Aorta (tissue), 5 donors: ENCODE measurements at regions of chr11 and their contacts with region 1.

Region 1: DNA sequence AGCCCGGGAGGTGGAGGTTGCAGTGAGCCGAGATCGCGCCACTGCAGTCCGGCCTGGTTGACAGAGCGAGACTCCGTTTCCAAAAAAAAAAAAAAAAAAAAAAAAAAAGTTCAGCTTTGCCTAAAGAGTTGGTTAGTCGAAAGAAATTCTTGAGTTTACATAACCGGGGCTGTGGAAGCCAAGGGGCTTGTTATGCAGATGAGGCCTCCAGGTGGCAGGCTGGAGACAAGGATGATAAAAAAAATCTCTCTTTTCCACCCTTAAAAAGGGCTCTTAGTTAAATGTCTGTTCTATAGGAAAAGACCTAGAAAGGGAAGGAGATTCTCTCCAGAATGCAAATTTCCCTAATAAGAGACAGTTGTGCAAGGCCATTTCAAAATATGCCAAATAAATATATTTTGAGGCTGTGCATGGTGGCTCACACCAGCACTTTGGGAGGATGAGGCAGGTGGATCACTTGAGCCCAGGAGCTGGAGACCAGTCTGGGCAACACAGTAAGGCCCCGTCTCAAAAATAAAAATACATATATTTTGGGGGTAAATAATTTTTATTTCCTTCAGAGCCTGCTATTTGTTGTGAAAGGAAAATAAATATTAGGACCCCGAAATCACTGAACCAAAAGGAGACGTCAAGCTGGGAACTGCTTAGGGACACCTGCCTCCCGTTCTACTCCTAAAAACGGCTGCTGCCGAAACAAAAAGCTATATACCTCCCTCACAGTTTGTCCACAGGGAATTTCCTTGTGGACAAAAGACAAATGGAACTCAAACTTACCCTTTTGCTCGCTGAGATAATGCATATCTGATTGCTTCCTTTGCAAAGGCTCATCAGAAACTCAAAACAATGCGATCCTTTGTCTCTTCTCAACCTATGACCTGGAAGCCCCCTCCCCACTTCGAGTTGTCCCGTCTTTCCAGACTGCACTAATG is 2.4 kb upstream of the IFITM2 start:
- DNase-seq: peak in 1 of 2 donors; percentile 73
- ATAC-seq: no peak
- H3K4me3 ChIP-seq: no peak overlapping the region
- H3K27ac ChIP-seq: no peak overlapping the region
- H3K4me1 ChIP-seq: no peaks in the 10 kb centered on the region
- H3K27me3 ChIP-seq: no peaks in the 10 kb centered on the region

Region 2: DNA sequence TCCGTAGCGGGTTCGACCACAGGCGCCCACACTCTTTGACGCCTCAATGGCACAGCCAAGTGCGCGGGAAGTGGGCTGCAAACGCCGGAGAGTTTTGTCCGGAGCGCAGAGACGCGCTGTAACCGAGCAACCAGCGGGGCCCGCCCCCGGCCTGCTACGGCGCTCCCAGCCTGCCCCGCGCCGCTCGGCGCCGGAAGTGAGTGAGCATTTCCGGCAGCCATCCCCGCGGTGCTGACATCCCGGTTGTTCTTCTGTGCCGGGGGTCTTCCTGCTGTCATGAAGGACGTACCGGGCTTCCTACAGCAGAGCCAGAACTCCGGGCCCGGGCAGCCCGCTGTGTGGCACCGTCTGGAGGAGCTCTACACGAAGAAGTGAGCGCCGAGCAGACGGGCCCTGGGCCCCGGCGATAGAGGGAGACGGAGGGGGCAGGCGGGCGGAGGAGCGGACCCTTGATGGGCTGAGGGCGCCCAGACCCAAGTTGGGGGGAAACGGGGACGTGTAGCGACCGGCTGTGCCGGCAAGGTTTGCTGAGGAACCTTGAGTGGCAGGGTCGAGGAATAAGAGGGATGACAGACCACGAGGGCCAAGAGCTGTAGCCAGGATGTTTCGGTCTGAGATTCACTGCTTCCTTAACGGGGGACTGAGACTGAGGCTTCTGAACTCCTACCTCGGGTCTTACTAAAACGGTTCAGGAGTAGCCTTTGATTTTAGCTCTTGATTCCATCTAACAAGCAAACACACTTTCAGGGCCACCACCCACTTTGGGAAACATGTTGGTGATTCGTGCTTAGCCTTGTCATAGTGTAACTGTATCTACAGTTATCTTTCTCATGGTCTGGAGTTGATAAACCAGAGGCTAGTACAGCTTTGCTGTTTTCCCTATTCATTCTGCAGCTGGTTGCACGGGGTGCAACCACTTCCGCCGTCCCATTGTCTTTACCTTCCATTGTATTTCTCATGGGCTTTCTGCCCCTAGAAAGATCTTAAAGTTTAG is 68.1 kb before region 1 on chr11 and contains the start of gene PSMD13:
- intact Hi-C with region 1: loop called in 1 of 2 experiments (anchors 10 kb)
- DNase-seq: peak; percentile 93 to 96
- ATAC-seq: peak; percentile 97
- H3K4me3 ChIP-seq: peak within 1 kb of the TSS; percentile 90 to 92
- H3K27ac ChIP-seq: peak within 1 kb of the TSS; percentile 31 to 80
- H3K4me1 ChIP-seq: no peaks in the 10 kb centered on the region
- H3K27me3 ChIP-seq: no peaks in the 10 kb centered on the region
- total RNA-seq, gene PSMD13: 75.4 to 80.9 TPM

Region 3: GRCh38 chr11:326842-327580 is 21.8 kb after region 1 on chr11:
- intact Hi-C with region 1: no loop called
- DNase-seq: peak; percentile 91 to 92
- ATAC-seq: peak; percentile 83
- H3K4me3 ChIP-seq: no peak overlapping the region
- H3K27ac ChIP-seq: no peak overlapping the region
- H3K4me1 ChIP-seq: no peaks in the 10 kb centered on the region
- H3K27me3 ChIP-seq: no peaks in the 10 kb centered on the region

Region 4: GRCh38 chr11:420054-420910 is 115.1 kb after region 1 on chr11:
- intact Hi-C with region 1: no loop called
- DNase-seq: peak in 1 of 2 donors; percentile 49
- ATAC-seq: no peak
- H3K4me3 ChIP-seq: no peak overlapping the region
- H3K27ac ChIP-seq: no peak overlapping the region
- H3K4me1 ChIP-seq: no peaks in the 10 kb centered on the region
- H3K27me3 ChIP-seq: no peaks in the 10 kb centered on the region

Region 5: DNA sequence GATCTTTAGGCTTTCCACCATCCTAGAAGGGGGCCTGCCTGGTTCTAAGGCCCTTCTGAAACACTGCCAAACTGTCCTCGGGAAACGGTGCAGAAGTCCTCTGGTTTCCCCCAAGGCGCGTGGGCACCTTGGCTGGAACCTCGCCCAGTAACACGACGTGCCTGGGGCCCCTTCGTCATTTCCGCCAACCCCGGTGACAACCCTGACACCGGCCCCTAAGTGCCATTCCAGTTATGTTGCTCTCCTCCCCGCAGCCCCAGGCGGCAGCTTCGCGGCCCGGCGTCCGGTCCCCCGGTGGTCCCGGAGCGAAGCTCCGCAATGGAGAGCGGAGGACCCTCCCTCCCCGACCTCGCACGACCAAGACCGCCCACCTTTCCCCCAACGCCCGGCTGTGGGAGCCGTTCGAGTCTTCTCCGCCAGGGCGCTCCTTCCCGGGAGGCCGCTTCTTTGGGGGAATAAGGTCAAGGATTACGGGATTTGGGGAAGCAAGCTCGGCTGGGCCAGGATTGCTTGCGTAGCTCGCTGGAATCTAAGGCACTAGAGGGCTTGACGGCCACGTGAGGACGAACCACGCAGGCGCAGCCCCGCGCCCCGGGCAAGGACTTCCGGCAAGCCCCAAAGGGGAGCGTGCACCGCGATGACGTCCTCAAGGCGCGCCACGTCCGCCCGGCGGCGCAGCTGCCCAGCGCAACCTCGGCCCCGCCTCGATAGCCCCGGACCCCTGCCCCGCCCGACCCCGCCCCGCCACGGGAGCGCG is 201.2 kb after region 1 on chr11:
- intact Hi-C with region 1: no loop called
- DNase-seq: peak; percentile 99 to 100
- ATAC-seq: peak; percentile 94
- H3K4me3 ChIP-seq: peak overlapping the region; percentile 40 to 90
- H3K27ac ChIP-seq: peak overlapping the region; percentile 63 to 100
- H3K4me1 ChIP-seq: no peaks in the 10 kb centered on the region
- H3K27me3 ChIP-seq: no peaks in the 10 kb centered on the region